Right lobe of liver (tissue), 6 donors: ENCODE measurements at regions of chr12 and their contacts with region 1.

Region 1: DNA sequence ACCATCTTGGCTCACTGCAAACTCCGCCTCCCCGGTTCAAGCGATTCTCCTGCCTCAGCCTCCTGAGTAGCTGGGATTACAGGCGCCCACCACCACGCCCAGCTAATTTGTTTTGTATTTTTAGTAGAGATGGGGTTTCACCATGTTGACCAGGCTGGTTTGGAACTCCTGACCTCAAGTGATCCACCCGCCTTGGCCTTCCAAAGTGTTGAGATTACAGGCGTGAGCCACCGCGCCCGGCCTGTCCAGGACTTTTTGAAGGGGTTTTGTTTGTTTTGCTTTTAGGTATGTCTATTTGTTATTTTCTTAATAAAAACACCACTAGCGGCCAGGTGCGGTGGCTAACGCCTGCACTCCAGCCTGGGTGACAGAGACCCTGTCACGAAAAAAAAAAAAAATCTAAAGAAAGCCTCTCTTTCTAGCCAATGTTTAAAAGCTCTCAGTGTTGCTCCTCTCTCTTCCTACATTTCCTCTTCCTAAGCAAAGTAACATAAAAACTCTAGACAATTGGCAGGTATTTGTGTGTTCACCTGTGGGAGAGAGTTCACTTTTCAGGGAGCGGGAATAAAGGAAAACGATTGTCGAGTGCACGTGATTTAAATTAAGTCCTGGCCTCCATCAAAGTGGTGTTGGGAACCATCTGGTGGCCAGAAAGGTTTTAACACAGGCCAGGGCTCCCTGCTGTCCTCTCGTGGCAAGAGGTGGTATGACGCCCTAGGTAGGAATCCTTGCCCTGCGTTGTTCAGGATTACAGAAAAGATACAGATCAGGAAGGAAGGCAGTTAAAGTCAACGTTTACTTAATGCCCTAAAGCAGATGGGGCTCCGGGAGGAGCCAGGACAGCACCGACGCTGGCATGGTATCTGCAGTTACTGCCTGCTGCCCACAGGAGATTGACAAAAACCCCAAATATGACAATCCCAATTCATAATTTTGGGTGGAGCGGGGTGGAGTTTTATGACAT is 36.2 kb upstream of the ATP23 start:
- DNase-seq: peak; percentile 70 to 85 (median 76)
- ATAC-seq: peak; percentile 100
- H3K4me3 ChIP-seq: peak overlapping the region in 2 of 3 donors; percentile 17 to 25
- H3K27ac ChIP-seq: no peak overlapping the region
- H3K4me1 ChIP-seq: peaks cover 0 to 4% (median 2%) of the 10 kb centered on the region in 4 donors
- H3K27me3 ChIP-seq: no peaks in the 10 kb centered on the region
- CTCF ChIP-seq: peak; percentile 98 to 100 (median 100)
- POLR2A ChIP-seq: no peak

Region 2: GRCh38 chr12:57771708-57772428 is 133.3 kb before region 1 on chr12 and contains the start of gene METTL1:
- intact Hi-C with region 1: no loop called
- DNase-seq: peak; percentile 93 to 95 (median 95)
- ATAC-seq: peak; percentile 92 to 96 (median 94)
- H3K4me3 ChIP-seq: peak within 1 kb of the TSS; percentile 72 to 88 (median 79)
- H3K27ac ChIP-seq: peak within 1 kb of the TSS; percentile 75 to 96 (median 75)
- H3K4me1 ChIP-seq: peaks cover 2 to 11% (median 7%) of the 10 kb centered on the region in 4 donors
- H3K27me3 ChIP-seq: no peaks in the 10 kb centered on the region
- CTCF ChIP-seq: no peak
- POLR2A ChIP-seq: peak; percentile 78
- total RNA-seq, gene METTL1: 9.7 to 13.6 (median 10.3) TPM

Region 3: DNA sequence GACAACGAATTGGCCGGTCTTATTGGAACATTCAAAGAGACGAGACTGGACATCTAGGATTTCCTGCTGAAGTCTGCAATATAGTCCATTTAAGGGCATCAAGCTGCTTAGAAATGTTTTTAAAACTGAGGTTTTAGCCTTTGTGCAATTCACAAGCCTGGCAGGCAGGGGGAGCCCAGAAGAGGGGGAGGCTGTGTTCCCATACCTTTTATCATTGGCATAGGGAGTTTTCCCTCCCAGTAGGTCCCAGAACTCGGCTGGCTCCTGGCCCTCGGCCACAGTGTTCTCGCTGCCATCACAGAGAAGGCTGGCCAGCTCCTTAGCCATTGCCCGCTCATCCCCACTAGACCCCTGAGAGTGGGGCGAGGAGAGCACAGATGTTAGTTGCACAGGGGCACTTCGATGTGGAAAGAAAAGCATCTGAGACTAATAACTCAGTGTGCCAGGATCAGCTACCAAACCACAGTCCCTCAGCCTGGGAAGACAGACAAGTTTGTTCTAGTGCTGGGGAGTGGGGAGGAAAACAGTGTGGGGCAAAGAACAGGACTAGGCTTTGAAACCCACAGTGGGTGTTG is 101.7 kb before region 1 on chr12:
- intact Hi-C with region 1: loop called in 1 of 2 experiments (anchors 10 kb)
- DNase-seq: peak in 2 of 3 donors; percentile 44 to 59
- ATAC-seq: peak; percentile 92 to 96 (median 94)
- H3K4me3 ChIP-seq: no peak overlapping the region
- H3K27ac ChIP-seq: no peak overlapping the region
- H3K4me1 ChIP-seq: no peaks in the 10 kb centered on the region
- H3K27me3 ChIP-seq: no peaks in the 10 kb centered on the region
- CTCF ChIP-seq: peak; percentile 58 to 79 (median 72)
- POLR2A ChIP-seq: no peak

Region 4: DNA sequence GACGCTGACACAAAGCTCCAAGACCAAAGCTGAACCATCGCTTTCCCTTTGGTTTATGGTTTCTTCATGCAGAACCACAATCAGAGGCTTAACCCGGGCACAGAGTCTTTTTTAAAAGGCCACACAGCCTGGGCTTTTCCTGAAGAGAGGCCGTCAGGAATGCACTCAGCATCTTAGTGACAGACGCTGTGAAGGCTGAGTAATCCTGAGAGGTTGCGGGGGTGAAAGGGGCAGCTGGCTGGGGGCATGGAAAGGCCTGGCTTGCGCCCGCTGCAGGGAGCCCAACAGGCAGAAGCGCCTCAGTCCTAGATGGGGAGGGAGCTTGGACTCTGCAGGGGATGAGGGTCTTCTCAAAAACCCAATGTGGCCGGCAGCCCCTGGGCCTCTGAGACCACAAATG is 72.2 kb before region 1 on chr12:
- intact Hi-C with region 1: loop called (anchors 5 kb)
- DNase-seq: no peak
- ATAC-seq: no peak
- H3K4me3 ChIP-seq: no peak overlapping the region
- H3K27ac ChIP-seq: no peak overlapping the region
- H3K4me1 ChIP-seq: peaks cover 0 to 68% (median 28%) of the 10 kb centered on the region in 4 donors
- H3K27me3 ChIP-seq: no peaks in the 10 kb centered on the region
- CTCF ChIP-seq: no peak
- POLR2A ChIP-seq: no peak

Region 5: DNA sequence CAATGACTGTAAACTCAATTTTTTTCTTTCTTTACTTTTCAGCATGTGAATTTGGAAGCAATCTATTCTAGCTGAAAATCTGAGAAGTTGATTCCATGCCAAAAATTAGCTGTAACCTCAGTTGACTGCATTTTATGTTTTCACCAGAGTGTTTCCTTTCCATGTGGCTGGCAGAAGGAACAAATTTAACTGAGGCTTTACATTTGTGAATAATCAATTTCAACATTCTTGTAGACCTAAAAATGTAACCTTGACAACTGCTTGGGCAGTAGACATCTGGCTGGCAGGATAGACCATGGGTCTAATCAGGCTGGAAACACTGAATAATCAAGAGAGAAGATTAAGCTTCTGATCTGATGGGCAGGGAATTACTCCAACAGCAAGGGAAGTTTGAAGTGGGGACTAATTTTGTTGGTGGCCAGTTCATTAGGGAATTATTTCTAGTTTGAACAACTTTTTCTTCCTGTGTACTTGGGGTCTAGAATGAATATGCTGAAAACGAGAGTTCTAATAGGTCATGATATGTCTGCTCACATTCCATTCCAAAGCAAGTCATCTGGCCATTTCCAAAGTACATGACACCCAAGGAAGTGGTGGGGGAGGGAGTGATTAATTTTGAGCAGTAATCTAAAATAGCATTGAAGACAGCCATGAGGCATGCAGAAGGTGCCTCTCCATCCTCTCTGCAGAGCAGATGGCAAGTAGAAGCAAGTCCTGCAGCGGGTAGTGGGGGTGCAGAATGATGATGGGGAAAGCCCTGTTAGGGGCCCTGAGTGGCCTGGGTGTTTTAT is 104.5 kb after region 1 on chr12:
- intact Hi-C with region 1: no loop called
- DNase-seq: no peak
- ATAC-seq: no peak
- H3K4me3 ChIP-seq: no peak overlapping the region
- H3K27ac ChIP-seq: no peak overlapping the region
- H3K4me1 ChIP-seq: no peaks in the 10 kb centered on the region
- H3K27me3 ChIP-seq: no peaks in the 10 kb centered on the region
- CTCF ChIP-seq: no peak
- POLR2A ChIP-seq: no peak